ENCODE measurements at regions of chr4 and their contacts with region 1.

Region 1: DNA sequence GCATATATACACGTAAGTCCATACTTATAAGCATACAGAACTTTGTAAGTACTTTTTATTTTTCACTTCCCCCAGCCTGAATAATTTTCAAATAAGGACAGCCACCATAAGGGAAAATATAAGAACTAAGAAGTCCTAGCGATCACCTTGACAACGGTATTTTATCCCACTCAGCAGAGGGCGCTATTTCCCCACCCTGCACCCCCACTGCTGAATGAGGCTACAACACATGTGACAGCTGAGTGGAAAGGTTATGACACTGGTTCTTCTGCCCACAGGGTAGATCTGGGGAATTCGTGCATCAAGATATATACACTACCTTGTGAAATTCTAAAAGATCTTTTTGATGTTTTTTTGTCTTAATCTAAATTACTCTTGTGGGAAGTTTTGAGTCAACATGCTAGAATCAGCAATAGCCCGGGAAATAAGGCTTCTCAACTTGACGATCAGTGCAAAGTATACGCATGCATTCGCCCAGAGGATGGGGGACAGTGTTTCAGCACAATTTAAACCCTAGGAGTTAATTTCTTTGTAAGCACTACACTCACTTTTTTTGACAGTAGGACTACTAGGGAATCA is 151.5 kb downstream of the CORIN start:
- DNase-seq: peak in 3 of 4 donors; percentile 41 to 67 (median 43)
- ATAC-seq: peak; percentile 95
- H3K4me3 ChIP-seq: no peak overlapping the region
- H3K27ac ChIP-seq: no peak overlapping the region
- H3K4me1 ChIP-seq: no peaks in the 10 kb centered on the region
- H3K27me3 ChIP-seq: no peaks in the 10 kb centered on the region
- CTCF ChIP-seq: peak; percentile 49 to 59

Region 2: DNA sequence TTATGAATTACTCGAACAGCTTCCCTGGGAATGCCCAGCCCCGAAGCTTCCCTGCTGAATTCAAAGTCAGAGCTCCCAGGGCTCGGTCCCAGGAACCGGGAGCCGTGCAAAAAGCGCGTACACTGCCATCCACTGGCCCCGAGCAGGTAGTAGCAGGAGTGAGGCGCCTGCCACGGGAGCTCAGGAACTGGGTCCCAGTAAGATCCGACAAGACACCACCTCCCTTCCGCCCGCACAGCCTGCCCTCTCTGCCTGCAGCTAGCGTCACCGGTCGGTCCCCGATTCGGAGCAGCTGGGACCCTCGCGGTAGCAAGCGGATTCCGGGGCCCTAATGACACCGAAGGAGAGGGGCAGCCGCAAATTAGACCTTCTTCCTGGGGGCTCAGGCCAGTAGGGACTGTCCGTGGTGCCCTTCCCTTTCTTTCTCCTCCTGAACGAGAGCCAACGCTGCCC is 150.3 kb after region 1 on chr4:
- intact Hi-C with region 1: loop called in 1 of 2 experiments (anchors 10 kb)
- DNase-seq: peak; percentile 75 to 90 (median 86)
- ATAC-seq: peak; percentile 96
- H3K4me3 ChIP-seq: peak overlapping the region; percentile 43 to 44
- H3K27ac ChIP-seq: no peak overlapping the region
- H3K4me1 ChIP-seq: peaks cover 8 to 33% of the 10 kb centered on the region in 2 donors
- H3K27me3 ChIP-seq: peaks cover 0 to 30% of the 10 kb centered on the region in 2 donors
- CTCF ChIP-seq: peak; percentile 64 to 67

Region 3: GRCh38 chr4:47933840-47934239 is 247.5 kb after region 1 on chr4:
- intact Hi-C with region 1: loop called in 1 of 2 experiments (anchors 10 kb)
- DNase-seq: peak in 2 of 4 donors; percentile 45 to 55
- ATAC-seq: peak; percentile 85
- H3K4me3 ChIP-seq: no peak overlapping the region
- H3K27ac ChIP-seq: no peak overlapping the region
- H3K4me1 ChIP-seq: no peaks in the 10 kb centered on the region
- H3K27me3 ChIP-seq: no peaks in the 10 kb centered on the region
- CTCF ChIP-seq: peak; percentile 48 to 65

Measured in left lung (tissue), 14 donors.